AG04449 (cell line): ENCODE measurements at regions of chr2 and their contacts with region 1.

Region 1: DNA sequence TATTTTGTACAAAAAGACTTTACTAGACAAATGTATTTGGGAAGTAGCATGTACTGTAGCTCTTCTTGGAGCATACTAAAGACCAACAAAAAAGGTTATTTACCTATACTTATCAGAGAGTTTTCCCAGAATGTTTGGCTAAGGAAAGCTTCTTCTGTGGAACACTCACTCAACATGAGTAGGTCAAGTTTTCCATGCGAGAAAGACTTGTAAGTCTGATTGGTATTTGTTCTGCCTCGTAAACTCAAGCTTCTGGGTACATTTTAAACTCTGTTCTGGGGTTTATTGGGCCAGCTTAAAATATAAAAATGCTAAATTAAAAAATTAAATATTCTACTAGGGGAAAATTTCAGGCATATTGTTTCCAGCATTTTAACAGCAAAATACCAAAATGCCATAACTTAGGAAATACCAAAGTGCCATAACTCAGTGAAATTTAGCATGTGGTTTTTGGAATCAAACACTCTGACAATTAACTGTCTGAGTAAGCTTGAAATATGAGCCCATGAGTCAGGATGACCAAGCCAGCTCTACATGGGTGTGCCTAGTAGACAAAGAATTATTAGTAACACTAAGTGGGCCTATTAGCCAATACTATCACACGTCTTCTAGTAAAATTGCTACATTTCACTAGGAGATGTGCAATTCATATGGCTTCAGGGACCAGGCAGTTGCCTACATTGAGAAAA is 47.3 kb upstream of the SERPINE2 start:
- DNase-seq: peak; percentile 73
- H3K4me3 ChIP-seq: no peak overlapping the region
- CTCF ChIP-seq: no peak

Region 2: GRCh38 chr2:224101820-224102630 is 15.7 kb after region 1 on chr2:
- CTCF ChIA-PET with region 1: interaction called, 3 read pairs
- POLR2A ChIA-PET with region 1: interaction called, 26 read pairs
- DNase-seq: peak; percentile 98
- H3K4me3 ChIP-seq: no peak overlapping the region
- CTCF ChIP-seq: no peak

Region 3: DNA sequence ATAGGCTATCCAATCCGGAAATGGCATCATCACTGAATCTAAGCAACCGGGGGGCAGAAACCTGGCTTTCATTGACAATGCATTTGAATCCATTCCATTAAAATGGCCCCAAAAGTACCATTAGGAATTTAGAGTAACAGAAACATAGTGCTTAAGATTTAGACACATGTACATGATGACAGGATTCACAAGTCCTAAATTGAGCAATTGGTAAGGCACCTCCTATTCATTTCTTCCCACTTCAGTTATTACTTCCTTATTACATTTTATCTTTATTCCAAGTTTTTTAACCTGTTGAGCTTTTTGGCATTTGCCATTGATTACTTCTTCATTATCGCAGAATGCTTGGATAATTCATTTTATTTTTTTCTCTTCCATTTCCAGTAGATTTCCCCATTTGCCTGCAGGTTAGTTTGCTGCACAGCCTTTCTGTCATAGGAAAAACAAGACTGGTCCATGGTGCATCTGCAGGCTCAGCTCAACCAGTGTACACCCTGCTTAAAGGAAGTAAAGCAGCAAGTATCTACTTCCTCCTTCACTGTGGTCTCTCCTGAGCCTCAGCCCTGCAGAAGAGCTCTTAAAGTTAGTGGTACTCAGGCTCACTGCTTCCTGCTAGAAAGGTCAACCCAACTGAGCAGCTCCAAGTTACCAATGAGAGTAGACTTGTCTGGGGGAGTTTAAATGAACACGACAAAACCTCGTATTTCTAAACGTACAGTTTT is 866.7 kb after region 1 on chr2:
- CTCF ChIA-PET with region 1: no interaction called
- POLR2A ChIA-PET with region 1: no interaction called
- DNase-seq: no peak
- H3K4me3 ChIP-seq: no peak overlapping the region
- CTCF ChIP-seq: no peak